ENCODE measurements at regions of chr15 and their contacts with region 1.

Region 1: GRCh38 chr15:24848050-24848449 is 106.7 kb upstream of the SNRPN start:
- DNase-seq: no peak
- ATAC-seq: peak; percentile 77

Region 2: GRCh38 chr15:24772686-24773373 is 75.2 kb before region 1 on chr15:
- intact Hi-C with region 1: loop called (anchors 2 kb)
- DNase-seq: peak; percentile 82
- ATAC-seq: peak; percentile 93